ENCODE measurements at regions of chr12 and their contacts with region 1.

Region 1: DNA sequence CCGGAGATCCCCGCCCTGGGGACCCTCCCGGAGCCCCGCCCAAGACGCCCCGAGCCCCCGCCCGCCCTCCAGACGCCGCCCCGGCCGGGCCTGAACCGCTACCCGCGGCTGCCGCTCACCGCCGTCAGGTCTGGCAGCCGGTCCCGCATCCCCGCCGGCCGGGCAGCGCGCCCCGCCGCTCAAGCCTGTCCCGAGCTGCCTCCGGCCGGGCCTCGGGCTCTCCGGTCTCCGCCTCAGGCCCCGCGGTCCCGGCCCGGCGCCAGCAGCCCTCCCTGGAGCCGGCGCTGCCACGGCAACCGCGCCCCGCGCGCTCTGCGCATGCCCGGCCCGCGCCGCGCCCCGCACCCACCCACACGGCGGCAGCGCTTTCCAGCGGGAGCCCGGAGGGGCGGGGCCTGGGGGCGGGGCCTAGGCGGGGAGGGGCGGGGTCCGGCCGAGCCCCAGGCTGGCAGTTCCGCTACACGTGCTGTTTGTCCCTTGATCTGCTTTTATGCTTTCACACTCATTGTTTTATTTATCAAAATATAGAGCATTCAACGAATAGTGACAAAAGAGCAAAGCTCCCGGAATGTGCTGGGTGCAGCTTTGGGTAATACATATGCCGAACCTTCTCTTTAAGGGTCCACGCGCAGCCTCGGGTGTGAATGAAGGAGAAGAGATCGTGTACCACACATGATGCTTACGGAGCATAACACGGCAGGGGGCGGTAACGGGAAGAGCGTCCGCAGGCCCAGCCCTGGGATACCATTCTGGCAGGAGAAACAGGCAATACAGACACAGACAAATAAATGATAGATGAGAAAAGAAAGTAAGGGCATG is at the start of gene STX2:
- DNase-seq: peak; percentile 89
- H3K4me3 Mint-ChIP-seq: peak within 1 kb of the TSS; percentile 78
- H3K27ac Mint-ChIP-seq: peak within 1 kb of the TSS; percentile 2
- H3K4me1 Mint-ChIP-seq: peaks cover 30% of the 10 kb centered on the region
- H3K27me3 Mint-ChIP-seq: no peaks in the 10 kb centered on the region
- total RNA-seq, gene STX2: 22.4 to 23.0 TPM

Region 2: GRCh38 chr12:130555628-130556485 is 283.3 kb before region 1 on chr12:
- CTCF ChIA-PET with region 1: no interaction called
- POLR2A ChIA-PET with region 1: no interaction called
- DNase-seq: no peak
- H3K4me3 Mint-ChIP-seq: no peak overlapping the region
- H3K27ac Mint-ChIP-seq: no peak overlapping the region
- H3K4me1 Mint-ChIP-seq: no peaks in the 10 kb centered on the region
- H3K27me3 Mint-ChIP-seq: no peaks in the 10 kb centered on the region

Region 3: GRCh38 chr12:130818635-130819576 is 20.3 kb before region 1 on chr12:
- CTCF ChIA-PET with region 1: interaction called, 12 read pairs
- POLR2A ChIA-PET with region 1: interaction called, 4 read pairs
- DNase-seq: peak; percentile 77
- H3K4me3 Mint-ChIP-seq: peak overlapping the region; percentile 72
- H3K27ac Mint-ChIP-seq: peak overlapping the region; percentile 40
- H3K4me1 Mint-ChIP-seq: peaks cover 25% of the 10 kb centered on the region
- H3K27me3 Mint-ChIP-seq: no peaks in the 10 kb centered on the region

Region 4: DNA sequence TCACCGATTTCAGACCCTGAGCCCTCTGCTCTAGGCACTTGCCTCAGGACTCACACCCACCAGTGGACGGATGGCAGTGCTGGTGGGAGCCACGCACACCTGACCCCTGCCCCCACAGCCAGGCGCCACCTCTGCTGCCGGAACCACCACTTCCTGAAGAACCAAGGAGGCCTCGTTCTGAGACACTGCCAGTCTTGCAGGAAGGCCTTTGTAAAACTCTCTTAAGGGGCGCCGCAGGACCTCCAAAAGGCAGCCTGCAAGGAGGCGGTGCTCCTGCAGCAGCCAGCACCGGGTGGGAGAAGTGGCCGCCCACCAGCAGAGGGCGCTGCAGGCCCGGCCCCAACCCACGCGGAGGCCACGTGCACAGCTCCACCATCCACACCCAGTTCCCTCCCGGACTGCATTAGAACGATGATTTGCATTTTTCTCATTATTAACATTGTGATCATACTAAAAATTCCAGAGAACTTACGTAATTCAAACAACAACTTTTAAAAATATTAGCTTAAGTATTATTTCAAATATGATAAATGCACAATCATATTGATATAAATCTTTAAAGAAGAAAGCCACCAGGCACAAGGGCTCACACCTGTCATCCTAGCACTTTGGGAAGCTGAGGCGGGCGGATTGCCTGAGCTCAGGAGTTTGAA is 12.9 kb before region 1 on chr12:
- CTCF ChIA-PET with region 1: interaction called, 36 read pairs
- POLR2A ChIA-PET with region 1: interaction called, 4 read pairs
- DNase-seq: peak; percentile 65
- H3K4me3 Mint-ChIP-seq: no peak overlapping the region
- H3K27ac Mint-ChIP-seq: no peak overlapping the region
- H3K4me1 Mint-ChIP-seq: peaks cover 17% of the 10 kb centered on the region
- H3K27me3 Mint-ChIP-seq: no peaks in the 10 kb centered on the region

Region 5: GRCh38 chr12:130871286-130872178 is 32.4 kb after region 1 on chr12 and contains the start of gene RAN:
- CTCF ChIA-PET with region 1: interaction called, 9 read pairs
- POLR2A ChIA-PET with region 1: interaction called, 26 read pairs
- DNase-seq: peak; percentile 93
- H3K4me3 Mint-ChIP-seq: peak within 1 kb of the TSS; percentile 90
- H3K27ac Mint-ChIP-seq: peak within 1 kb of the TSS; percentile 94
- H3K4me1 Mint-ChIP-seq: peaks cover 56% of the 10 kb centered on the region
- H3K27me3 Mint-ChIP-seq: no peaks in the 10 kb centered on the region
- total RNA-seq, gene RAN: 932 to 936 TPM

Region 6: DNA sequence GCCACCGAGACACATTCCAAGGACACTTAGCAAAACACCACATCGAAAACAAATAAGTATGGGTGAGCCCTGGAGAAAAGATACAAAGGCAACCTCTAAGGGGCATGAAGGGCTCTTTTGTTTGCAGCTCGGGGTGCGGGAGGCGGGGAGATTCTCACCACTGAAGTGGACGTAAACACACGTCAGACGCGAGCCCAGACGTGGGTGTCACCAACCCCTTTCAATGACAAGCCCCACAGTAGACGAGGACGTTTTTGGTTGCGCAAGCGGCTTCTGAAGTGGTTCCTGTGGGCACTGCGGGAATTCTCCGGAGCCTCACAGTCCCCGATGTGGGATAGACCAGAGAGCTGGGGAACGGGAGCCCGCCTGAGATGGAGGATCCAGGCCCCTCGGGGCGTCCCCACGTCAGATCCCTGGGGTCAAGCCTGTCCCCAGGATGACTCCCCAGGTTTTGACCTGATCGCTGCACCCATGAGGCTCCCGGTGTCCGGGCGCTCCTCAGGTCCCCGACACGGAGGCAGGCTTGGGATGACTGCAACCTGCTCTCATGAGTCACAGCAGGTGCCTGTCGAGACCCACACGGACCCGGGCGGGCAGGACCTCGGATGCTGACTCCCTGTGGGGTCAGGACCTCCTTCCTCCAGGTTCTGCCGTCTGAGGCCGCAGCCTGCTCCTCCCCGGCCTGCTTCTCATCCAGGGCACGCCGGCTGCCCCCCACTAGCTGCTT is 94.3 kb after region 1 on chr12:
- CTCF ChIA-PET with region 1: no interaction called
- POLR2A ChIA-PET with region 1: no interaction called
- DNase-seq: no peak
- H3K4me3 Mint-ChIP-seq: no peak overlapping the region
- H3K27ac Mint-ChIP-seq: no peak overlapping the region
- H3K4me1 Mint-ChIP-seq: no peaks in the 10 kb centered on the region
- H3K27me3 Mint-ChIP-seq: peaks cover 19% of the 10 kb centered on the region

Measured in activated CD4-positive, alpha-beta memory T cell treated with anti-CD3 and anti-CD28 coated beads, Interleukin-2, amount 10 ng/mL, durations not matched to agents 7 days and 5 days (primary cell).